Endothelial cell of umbilical vein (primary cell): ENCODE measurements at regions of chr6 and their contacts with region 1.

Region 1: DNA sequence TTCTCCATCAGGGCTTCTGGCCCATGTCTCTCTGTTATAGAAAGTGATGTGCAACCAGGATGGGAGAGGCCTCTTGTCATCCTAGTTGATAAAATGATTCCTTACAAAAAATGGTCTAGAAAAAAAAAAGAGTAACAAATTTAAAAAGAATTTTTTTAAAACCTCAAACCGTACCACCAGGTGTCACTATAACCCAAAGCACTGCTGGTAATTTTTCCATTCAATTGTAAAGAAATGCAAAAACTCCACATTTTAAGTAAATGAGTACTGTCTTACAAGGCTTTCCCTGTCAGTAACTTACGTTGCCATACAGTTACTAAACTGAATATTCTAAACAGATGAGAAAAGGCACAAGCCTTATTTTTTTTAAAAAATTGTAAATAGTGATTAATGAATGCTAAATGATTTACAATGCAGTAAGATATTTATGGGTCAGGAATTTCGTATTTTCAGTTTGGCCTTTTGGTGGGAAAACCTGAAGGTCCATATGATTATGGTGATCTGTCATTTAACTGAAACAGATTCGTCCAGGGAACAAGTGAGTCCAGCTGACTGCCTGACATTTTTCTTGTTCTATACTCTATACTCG is 95.4 kb downstream of the OGFRL1 start:
- DNase-seq: peak; percentile 84
- H3K4me3 ChIP-seq: no peak overlapping the region
- H3K27ac ChIP-seq: no peak overlapping the region
- H3K4me1 ChIP-seq: peaks cover 43% of the 10 kb centered on the region
- H3K27me3 ChIP-seq: no peaks in the 10 kb centered on the region
- CTCF ChIP-seq: peak; percentile 30 to 34
- POLR2A ChIP-seq: no peak

Region 2: DNA sequence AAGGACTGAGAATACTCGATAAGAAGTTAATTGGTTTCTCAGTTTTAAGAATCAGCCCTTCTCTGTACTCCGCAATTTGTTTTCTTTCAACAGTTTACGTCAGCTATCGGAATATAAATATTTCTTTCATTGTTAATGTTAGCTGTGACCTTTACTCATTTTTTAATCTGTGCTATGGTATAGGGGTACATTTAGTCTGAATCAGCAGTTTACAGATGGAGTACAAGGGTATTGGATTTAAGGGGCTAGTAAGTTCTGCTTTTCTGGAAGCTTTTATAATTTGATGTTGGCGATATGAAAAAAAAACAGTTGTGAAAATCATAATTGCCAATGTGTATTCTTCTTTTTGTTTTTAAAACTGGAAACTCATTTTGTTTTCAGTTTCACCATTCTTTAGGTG is 947.7 kb before region 1 on chr6:
- CTCF ChIA-PET with region 1: no interaction called
- POLR2A ChIA-PET with region 1: no interaction called
- dilution Hi-C with region 1: no loop called
- intact Hi-C with region 1: no loop called
- DNase-seq: no peak
- H3K4me3 ChIP-seq: no peak overlapping the region
- H3K27ac ChIP-seq: no peak overlapping the region
- H3K4me1 ChIP-seq: no peaks in the 10 kb centered on the region
- H3K27me3 ChIP-seq: no peaks in the 10 kb centered on the region
- CTCF ChIP-seq: no peak
- POLR2A ChIP-seq: no peak

Region 3: DNA sequence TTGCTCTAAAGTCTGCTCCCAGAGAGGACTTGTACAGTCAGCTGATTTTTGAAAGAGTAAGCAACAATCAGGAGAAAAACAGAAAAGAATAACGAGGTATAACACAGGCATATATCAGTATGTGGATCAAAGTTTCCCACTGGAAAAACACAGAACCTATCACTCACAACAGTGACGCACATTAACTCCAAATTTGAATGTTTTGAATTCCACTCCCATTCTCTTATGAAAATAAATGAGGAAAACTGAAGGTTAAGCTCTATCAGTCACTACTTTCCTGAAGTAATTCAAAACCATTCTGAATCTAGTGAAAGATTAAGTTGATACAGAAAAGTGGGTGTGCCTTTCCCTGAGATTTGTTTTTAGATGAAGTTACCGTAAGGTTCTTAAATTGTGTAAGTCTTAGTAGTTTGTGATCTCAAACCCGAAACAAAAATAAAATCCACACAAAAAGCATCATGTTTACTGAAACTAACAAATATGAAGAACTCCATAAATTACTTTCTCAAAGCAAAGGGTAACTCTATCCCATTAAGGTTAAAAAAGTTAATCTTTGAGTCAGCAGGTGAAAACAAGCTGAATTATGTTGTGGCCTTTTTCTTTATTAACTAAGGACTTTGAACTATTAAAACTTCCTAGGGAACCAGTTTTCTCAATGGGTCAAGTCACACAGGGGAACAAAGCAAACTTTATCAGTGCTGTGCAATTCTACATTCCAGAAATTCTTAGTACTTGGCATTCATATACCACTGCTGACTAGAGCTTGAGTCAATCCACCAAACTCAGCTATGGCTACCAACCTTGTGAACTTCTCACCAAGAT is 20.4 kb after region 1 on chr6:
- CTCF ChIA-PET with region 1: interaction called, 18 read pairs
- POLR2A ChIA-PET with region 1: no interaction called
- dilution Hi-C with region 1: no loop called
- intact Hi-C with region 1: loop called (anchors 1 kb)
- DNase-seq: peak; percentile 94
- H3K4me3 ChIP-seq: peak overlapping the region; percentile 22 to 83 (median 41)
- H3K27ac ChIP-seq: peak overlapping the region; percentile 95
- H3K4me1 ChIP-seq: peaks cover 89% of the 10 kb centered on the region
- H3K27me3 ChIP-seq: no peaks in the 10 kb centered on the region
- CTCF ChIP-seq: no peak
- POLR2A ChIP-seq: no peak

Region 4: GRCh38 chr6:71444222-71444621 is 60.2 kb after region 1 on chr6:
- CTCF ChIA-PET with region 1: interaction called, 13 read pairs
- POLR2A ChIA-PET with region 1: no interaction called
- dilution Hi-C with region 1: no loop called
- intact Hi-C with region 1: loop called (anchors 1 kb)
- DNase-seq: peak; percentile 41
- H3K4me3 ChIP-seq: no peak overlapping the region
- H3K27ac ChIP-seq: no peak overlapping the region
- H3K4me1 ChIP-seq: no peaks in the 10 kb centered on the region
- H3K27me3 ChIP-seq: no peaks in the 10 kb centered on the region
- CTCF ChIP-seq: no peak
- POLR2A ChIP-seq: no peak

Region 5: GRCh38 chr6:71579902-71580301 is 195.9 kb after region 1 on chr6:
- CTCF ChIA-PET with region 1: no interaction called
- POLR2A ChIA-PET with region 1: no interaction called
- dilution Hi-C with region 1: no loop called
- intact Hi-C with region 1: no loop called
- DNase-seq: peak; percentile 6
- H3K4me3 ChIP-seq: no peak overlapping the region
- H3K27ac ChIP-seq: no peak overlapping the region
- H3K4me1 ChIP-seq: peaks cover 7% of the 10 kb centered on the region
- H3K27me3 ChIP-seq: peaks cover 0 to 3% of the 10 kb centered on the region in 2 experiments
- CTCF ChIP-seq: no peak
- POLR2A ChIP-seq: no peak

Region 6: DNA sequence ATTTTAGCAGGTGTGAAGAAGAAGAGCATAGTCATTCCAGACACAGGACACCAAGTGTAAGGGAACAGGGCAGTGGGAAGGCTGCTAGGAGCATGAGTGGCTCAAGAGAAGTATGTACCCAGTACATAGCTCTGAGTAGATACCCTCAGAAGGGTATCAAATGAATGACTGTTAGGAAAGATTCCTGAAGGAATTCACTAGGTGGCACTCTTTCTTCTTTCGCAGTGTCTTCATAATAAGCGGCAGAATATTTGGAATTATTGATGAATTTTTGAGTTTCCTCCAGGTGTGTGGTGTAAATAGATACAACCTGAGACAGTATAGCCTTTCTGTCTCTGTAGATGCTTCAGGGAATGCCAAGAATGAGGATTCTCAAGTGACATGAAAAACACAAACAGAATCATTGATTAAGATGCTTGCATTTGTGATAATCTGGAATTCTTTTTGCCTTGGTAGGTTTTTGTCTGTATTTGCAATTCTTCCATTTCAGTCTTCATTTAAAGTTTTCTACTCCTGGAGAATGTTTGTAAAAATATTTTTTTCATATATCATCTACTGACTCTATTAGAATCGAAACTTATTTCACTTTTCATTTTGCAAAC is 238.0 kb after region 1 on chr6:
- CTCF ChIA-PET with region 1: no interaction called
- POLR2A ChIA-PET with region 1: no interaction called
- dilution Hi-C with region 1: no loop called
- intact Hi-C with region 1: loop called (anchors 10 kb)
- DNase-seq: peak; percentile 28
- H3K4me3 ChIP-seq: no peak overlapping the region
- H3K27ac ChIP-seq: no peak overlapping the region
- H3K4me1 ChIP-seq: no peaks in the 10 kb centered on the region
- H3K27me3 ChIP-seq: peaks cover 6 to 10% of the 10 kb centered on the region in 2 experiments
- CTCF ChIP-seq: peak; percentile 22 to 33
- POLR2A ChIP-seq: no peak